MCF 10A (cell line): ENCODE measurements at regions of chr1 and their contacts with region 1.

Region 1: GRCh38 chr1:39098546-39099250 is 72.5 kb downstream of the NDUFS5 start:
- DNase-seq: peak; percentile 84
- H3K4me3 Mint-ChIP-seq: no peak overlapping the region
- H3K27ac Mint-ChIP-seq: no peak overlapping the region
- H3K4me1 Mint-ChIP-seq: peaks cover 18% of the 10 kb centered on the region
- H3K27me3 Mint-ChIP-seq: no peaks in the 10 kb centered on the region
- CTCF ChIP-seq: peak; percentile 77

Region 2: GRCh38 chr1:39132505-39133339 is 34.0 kb after region 1 on chr1:
- CTCF ChIA-PET with region 1: interaction called, 7 read pairs
- POLR2A ChIA-PET with region 1: interaction called, 427 read pairs
- intact Hi-C with region 1: no loop called
- DNase-seq: peak; percentile 77
- H3K4me3 Mint-ChIP-seq: peak overlapping the region; percentile 10
- H3K27ac Mint-ChIP-seq: peak overlapping the region; percentile 85
- H3K4me1 Mint-ChIP-seq: peaks cover 52% of the 10 kb centered on the region
- H3K27me3 Mint-ChIP-seq: no peaks in the 10 kb centered on the region
- CTCF ChIP-seq: peak; percentile 14

Region 3: GRCh38 chr1:39183503-39184353 is 85.0 kb after region 1 on chr1:
- CTCF ChIA-PET with region 1: interaction called, 36 read pairs
- POLR2A ChIA-PET with region 1: interaction called, 84 read pairs
- intact Hi-C with region 1: loop called (anchors 2 kb)
- DNase-seq: peak; percentile 98
- H3K4me3 Mint-ChIP-seq: peak overlapping the region; percentile 53
- H3K27ac Mint-ChIP-seq: peak overlapping the region; percentile 88
- H3K4me1 Mint-ChIP-seq: peaks cover 52% of the 10 kb centered on the region
- H3K27me3 Mint-ChIP-seq: no peaks in the 10 kb centered on the region
- CTCF ChIP-seq: peak; percentile 29

Region 4: GRCh38 chr1:39258146-39258924 is 159.6 kb after region 1 on chr1:
- CTCF ChIA-PET with region 1: interaction called, 107 read pairs
- POLR2A ChIA-PET with region 1: interaction called, 18 read pairs
- intact Hi-C with region 1: loop called (anchors 1 kb)
- DNase-seq: peak; percentile 75
- H3K4me3 Mint-ChIP-seq: no peak overlapping the region
- H3K27ac Mint-ChIP-seq: peak overlapping the region; percentile 41
- H3K4me1 Mint-ChIP-seq: peaks cover 10% of the 10 kb centered on the region
- H3K27me3 Mint-ChIP-seq: no peaks in the 10 kb centered on the region
- CTCF ChIP-seq: peak; percentile 86

Region 5: DNA sequence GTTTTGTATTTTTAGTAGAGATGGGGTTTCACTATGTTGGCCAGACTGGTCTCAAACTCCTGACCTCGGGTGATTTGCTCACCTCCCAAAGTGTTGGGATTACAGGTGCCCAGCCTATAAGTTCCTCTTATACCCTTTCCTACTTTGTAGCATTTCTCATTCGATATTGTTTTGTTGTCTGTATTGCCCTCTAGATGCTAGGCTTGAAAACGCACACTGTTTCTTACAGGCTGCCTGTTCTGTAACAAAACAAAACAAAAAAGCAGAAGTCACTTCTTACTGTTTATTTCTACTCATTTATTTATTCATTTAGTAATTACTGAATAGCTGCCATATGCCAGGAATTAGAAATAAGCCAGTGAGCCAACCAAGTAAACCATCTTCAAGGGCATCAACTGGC is 255.9 kb after region 1 on chr1:
- CTCF ChIA-PET with region 1: interaction called, 23 read pairs
- POLR2A ChIA-PET with region 1: no interaction called
- intact Hi-C with region 1: no loop called
- DNase-seq: no peak
- H3K4me3 Mint-ChIP-seq: no peak overlapping the region
- H3K27ac Mint-ChIP-seq: no peak overlapping the region
- H3K4me1 Mint-ChIP-seq: peaks cover 12% of the 10 kb centered on the region
- H3K27me3 Mint-ChIP-seq: no peaks in the 10 kb centered on the region
- CTCF ChIP-seq: no peak

Region 6: GRCh38 chr1:39538588-39539465 is 440.1 kb after region 1 on chr1:
- CTCF ChIA-PET with region 1: interaction called, 15 read pairs
- POLR2A ChIA-PET with region 1: interaction called, 4 read pairs
- intact Hi-C with region 1: loop called (anchors 1 kb)
- DNase-seq: peak; percentile 74
- H3K4me3 Mint-ChIP-seq: no peak overlapping the region
- H3K27ac Mint-ChIP-seq: no peak overlapping the region
- H3K4me1 Mint-ChIP-seq: peaks cover 15% of the 10 kb centered on the region
- H3K27me3 Mint-ChIP-seq: no peaks in the 10 kb centered on the region
- CTCF ChIP-seq: peak; percentile 80

Region 7: DNA sequence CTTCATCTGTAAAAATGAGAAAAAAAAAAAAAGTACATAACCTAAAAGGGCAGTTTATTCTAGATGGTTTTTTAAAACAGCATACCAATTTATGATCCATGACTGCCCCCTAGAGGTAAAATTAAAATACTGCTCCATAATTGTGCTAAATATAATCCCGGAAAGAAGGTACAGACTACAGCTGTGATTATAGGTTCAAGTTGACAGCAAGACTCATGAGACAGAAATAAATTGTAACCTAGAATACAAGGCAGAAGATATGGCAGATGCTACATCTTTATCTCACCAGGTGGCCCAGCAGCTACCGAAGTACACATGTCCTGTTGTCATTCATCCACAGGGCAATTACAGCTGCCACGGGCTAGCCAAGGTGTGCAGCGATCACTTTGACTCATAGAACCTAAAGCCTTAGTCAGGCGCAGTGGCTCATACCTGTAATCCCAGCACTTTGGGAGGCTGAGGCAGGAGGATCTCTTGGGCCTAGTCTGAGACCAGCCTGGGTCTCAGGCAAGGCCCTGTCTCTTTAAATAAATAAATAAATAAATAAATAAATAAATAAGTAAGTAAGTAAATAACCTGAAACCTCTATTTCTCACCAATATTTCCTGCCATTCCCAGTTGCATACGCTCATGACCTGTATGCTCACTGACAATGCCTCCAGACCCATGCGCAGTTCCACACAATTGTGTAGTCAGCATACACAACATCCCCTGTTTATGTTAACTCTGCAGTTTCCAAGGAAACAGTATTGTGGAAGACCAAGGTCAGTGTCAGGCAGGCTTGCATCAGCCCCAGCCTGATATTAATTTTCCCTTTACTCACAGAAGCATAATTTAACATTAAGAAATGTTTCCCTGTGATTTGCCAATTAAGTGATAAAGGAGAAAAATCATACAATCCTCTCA is 621.6 kb after region 1 on chr1:
- CTCF ChIA-PET with region 1: interaction called, 4 read pairs
- POLR2A ChIA-PET with region 1: no interaction called
- intact Hi-C with region 1: loop called (anchors 1 kb)
- DNase-seq: peak; percentile 76
- H3K4me3 Mint-ChIP-seq: no peak overlapping the region
- H3K27ac Mint-ChIP-seq: no peak overlapping the region
- H3K4me1 Mint-ChIP-seq: no peaks in the 10 kb centered on the region
- H3K27me3 Mint-ChIP-seq: peaks cover 39% of the 10 kb centered on the region
- CTCF ChIP-seq: peak; percentile 50